Activated CD4-positive, alpha-beta T cell treated with anti-CD3 and anti-CD28 coated beads for 36 hours (primary cell): ENCODE measurements at regions of chr15 and their contacts with region 1.

Region 1: DNA sequence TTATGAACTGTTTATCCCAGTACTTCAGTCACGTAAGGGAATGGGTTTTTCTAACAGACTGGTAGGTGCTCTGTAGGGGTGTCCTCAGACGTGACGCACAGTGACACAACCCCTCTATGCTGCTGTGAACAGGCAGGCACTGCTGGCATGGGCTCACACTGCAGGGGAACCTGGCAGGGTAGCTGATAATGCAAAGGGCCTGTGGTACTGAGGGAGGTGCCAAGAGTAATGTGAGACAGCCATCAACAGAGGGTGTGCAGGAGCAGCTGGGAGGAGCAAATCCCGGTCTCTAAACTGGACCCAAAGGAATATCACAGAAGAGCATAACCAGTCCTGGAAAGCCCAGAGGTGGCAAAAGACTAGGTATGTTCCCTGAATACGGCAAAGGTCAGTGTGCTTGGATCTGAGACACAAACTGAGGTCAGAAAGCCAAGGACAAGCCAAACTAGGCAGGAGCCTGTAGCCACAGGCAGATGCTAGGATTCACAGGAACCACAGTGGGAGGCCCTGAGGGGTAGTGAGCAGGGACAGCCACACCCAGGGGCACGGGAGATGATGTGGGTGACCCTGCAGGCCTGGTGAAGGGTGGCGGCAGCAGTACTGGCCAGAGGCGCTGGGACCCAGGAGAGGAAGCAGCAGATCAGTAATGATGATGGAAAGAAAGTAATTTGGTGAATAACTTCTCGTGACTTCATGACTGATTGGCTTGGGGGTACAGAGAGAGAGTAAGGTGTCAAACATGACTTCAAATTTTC is 248.1 kb upstream of the CHRNA7 start:
- DNase-seq: no peak
- ATAC-seq: no peak
- H3K4me3 Mint-ChIP-seq: no peak overlapping the region
- H3K27ac Mint-ChIP-seq: no peak overlapping the region
- H3K4me1 Mint-ChIP-seq: no peaks in the 10 kb centered on the region
- H3K27me3 Mint-ChIP-seq: no peaks in the 10 kb centered on the region

Region 2: GRCh38 chr15:31727612-31728011 is 54.6 kb before region 1 on chr15:
- CTCF ChIA-PET with region 1: no interaction called
- POLR2A ChIA-PET with region 1: no interaction called
- intact Hi-C with region 1: loop called in 1 of 2 experiments (anchors 10 kb)
- DNase-seq: no peak
- ATAC-seq: no peak
- H3K4me3 Mint-ChIP-seq: no peak overlapping the region
- H3K27ac Mint-ChIP-seq: no peak overlapping the region
- H3K4me1 Mint-ChIP-seq: no peaks in the 10 kb centered on the region
- H3K27me3 Mint-ChIP-seq: peaks cover 29% of the 10 kb centered on the region

Region 3: DNA sequence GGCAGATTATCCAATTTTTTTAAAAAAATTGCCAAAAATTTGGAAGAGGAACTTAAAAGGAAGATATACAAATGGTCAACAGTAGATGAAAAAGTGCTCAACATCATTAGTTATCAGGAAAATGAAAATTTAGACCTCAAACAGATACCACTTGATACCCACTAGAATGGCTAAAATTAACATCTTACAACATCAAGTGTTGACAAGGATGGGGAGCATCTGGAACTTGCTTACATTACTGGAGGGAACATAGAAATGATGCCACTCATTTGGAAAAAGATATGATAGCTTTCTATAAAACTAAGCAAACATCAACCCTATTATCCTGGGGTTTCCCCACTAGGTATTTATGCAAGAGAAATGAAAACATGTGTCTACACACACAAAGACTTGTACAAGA is 36.4 kb before region 1 on chr15:
- CTCF ChIA-PET with region 1: no interaction called
- POLR2A ChIA-PET with region 1: no interaction called
- intact Hi-C with region 1: no loop called
- DNase-seq: no peak
- ATAC-seq: no peak
- H3K4me3 Mint-ChIP-seq: no peak overlapping the region
- H3K27ac Mint-ChIP-seq: no peak overlapping the region
- H3K4me1 Mint-ChIP-seq: no peaks in the 10 kb centered on the region
- H3K27me3 Mint-ChIP-seq: peaks cover 9% of the 10 kb centered on the region

Region 4: DNA sequence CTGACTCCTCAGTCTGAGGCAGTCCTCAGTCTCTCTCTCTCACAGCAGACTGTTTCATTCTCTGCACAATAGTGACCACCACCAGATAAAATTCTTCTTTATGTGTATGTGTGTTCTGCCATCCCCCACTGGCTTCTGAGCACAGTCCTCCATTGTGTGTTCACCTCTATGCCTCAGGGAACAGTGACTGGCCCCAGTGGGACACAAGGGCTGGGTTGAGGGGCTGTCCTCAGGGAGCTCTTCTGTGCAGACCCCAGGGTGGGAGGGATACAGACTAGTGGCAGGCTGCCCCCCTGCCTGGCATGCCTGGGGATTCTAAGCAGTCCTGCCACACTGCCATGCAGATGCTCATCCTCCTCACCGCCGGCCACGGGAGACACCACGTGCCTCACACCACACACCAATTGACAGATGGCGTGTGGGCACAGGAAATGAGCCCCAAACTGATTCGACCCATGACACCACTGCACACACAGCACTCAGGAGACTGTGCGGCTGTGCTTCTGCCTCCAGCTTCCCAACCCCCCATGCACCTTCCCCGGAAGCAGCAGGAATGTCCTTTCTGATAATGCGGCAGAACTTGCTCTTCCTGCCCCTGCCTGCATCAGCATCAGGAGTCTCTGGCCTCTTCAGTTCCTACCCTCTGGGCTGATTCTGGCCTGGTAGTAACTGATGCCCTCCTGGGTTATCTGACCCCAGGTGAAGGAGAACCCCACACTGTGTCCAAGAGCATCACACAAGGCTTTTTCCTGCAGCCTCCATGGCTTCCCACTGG is 10.6 kb after region 1 on chr15:
- CTCF ChIA-PET with region 1: no interaction called
- POLR2A ChIA-PET with region 1: no interaction called
- intact Hi-C with region 1: no loop called
- DNase-seq: no peak
- ATAC-seq: no peak
- H3K4me3 Mint-ChIP-seq: no peak overlapping the region
- H3K27ac Mint-ChIP-seq: no peak overlapping the region
- H3K4me1 Mint-ChIP-seq: no peaks in the 10 kb centered on the region
- H3K27me3 Mint-ChIP-seq: peaks cover 6% of the 10 kb centered on the region